Activated CD4-positive, alpha-beta T cell treated with anti-CD3 and anti-CD28 coated beads, Interleukin-2, amount 10 ng/mL, durations not matched to agents 7 days and 5 days (primary cell): ENCODE measurements at regions of chr7 and their contacts with region 1.

Region 1: GRCh38 chr7:30564243-30564892 is 30.3 kb upstream of the GARS1 start:
- DNase-seq: peak; percentile 85
- H3K4me3 Mint-ChIP-seq: no peak overlapping the region
- H3K27ac Mint-ChIP-seq: no peak overlapping the region
- H3K4me1 Mint-ChIP-seq: no peaks in the 10 kb centered on the region
- H3K27me3 Mint-ChIP-seq: no peaks in the 10 kb centered on the region

Region 2: GRCh38 chr7:30548762-30549344 is 15.5 kb before region 1 on chr7:
- CTCF ChIA-PET with region 1: interaction called, 34 read pairs
- POLR2A ChIA-PET with region 1: no interaction called
- DNase-seq: peak; percentile 47
- H3K4me3 Mint-ChIP-seq: no peak overlapping the region
- H3K27ac Mint-ChIP-seq: no peak overlapping the region
- H3K4me1 Mint-ChIP-seq: no peaks in the 10 kb centered on the region
- H3K27me3 Mint-ChIP-seq: no peaks in the 10 kb centered on the region